ENCODE measurements at regions of chr12 and their contacts with region 1.

Region 1: DNA sequence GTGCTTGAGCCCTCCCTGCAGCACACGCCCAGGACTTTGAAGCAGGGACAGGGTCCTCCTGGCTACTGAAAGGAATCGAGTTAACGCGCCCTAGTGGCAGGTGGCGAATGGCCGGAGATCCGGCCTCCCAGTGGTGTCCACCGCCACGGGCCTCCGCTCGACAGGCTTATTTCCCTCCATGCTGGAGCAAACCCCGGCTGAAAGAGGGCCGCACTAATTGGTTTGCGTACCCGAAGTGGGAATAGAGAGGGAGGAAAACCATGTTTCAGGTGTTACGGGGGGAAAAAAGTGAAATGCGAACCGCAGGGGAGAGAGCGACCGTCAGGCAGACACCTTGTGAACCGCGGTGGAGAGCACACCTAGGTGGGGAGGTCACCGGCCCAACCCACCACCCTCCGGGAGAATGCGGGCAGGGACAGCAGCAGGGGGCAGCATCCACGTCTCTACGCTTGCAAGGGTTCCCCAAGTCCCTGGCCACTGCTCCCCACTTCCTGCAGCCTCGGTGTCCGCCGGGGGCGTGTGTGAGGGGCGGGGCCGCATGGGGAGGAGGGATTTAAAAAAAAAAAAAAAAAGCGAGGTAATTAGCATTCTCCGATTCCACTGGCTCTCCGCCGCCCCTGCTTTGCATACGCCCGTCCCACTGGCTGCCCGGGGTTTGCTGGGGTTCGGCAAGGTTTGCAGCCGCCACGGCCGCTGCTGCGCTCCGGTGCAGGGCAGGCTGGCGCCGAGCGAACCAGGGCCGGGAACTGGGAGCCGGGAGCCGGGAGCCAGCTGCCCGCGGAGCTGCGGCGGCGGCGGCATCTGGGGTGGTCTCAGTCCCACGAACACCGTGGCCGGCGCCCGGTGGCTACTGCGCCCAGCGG is 224.6 kb upstream of the CRY1 start:
- DNase-seq: peak; percentile 81
- H3K4me3 ChIP-seq: peak overlapping the region; percentile 29 to 41 (median 30)
- H3K27ac ChIP-seq: no peak overlapping the region
- H3K4me1 ChIP-seq: peaks cover 20% of the 10 kb centered on the region
- H3K27me3 ChIP-seq: peaks cover 36 to 48% of the 10 kb centered on the region in 2 experiments
- CTCF ChIP-seq: peak in 1 of 2 donors; percentile 1
- POLR2A ChIP-seq: no peak

Region 2: GRCh38 chr12:107277855-107278254 is 40.1 kb before region 1 on chr12:
- CTCF ChIA-PET with region 1: no interaction called
- POLR2A ChIA-PET with region 1: no interaction called
- dilution Hi-C with region 1: no loop called
- intact Hi-C with region 1: loop called (anchors 5 kb)
- DNase-seq: peak; percentile 81
- H3K4me3 ChIP-seq: no peak overlapping the region
- H3K27ac ChIP-seq: peak overlapping the region; percentile 69
- H3K4me1 ChIP-seq: peaks cover 17% of the 10 kb centered on the region
- H3K27me3 ChIP-seq: no peaks in the 10 kb centered on the region
- CTCF ChIP-seq: no peak
- POLR2A ChIP-seq: no peak

Region 3: GRCh38 chr12:107328442-107329133 is 10.6 kb after region 1 on chr12:
- CTCF ChIA-PET with region 1: no interaction called
- POLR2A ChIA-PET with region 1: no interaction called
- dilution Hi-C with region 1: no loop called
- intact Hi-C with region 1: loop called (anchors 1 kb)
- DNase-seq: peak; percentile 45
- H3K4me3 ChIP-seq: no peak overlapping the region
- H3K27ac ChIP-seq: no peak overlapping the region
- H3K4me1 ChIP-seq: peaks cover 9% of the 10 kb centered on the region
- H3K27me3 ChIP-seq: peaks cover 8 to 10% of the 10 kb centered on the region in 2 experiments
- CTCF ChIP-seq: no peak
- POLR2A ChIP-seq: no peak

Region 4: DNA sequence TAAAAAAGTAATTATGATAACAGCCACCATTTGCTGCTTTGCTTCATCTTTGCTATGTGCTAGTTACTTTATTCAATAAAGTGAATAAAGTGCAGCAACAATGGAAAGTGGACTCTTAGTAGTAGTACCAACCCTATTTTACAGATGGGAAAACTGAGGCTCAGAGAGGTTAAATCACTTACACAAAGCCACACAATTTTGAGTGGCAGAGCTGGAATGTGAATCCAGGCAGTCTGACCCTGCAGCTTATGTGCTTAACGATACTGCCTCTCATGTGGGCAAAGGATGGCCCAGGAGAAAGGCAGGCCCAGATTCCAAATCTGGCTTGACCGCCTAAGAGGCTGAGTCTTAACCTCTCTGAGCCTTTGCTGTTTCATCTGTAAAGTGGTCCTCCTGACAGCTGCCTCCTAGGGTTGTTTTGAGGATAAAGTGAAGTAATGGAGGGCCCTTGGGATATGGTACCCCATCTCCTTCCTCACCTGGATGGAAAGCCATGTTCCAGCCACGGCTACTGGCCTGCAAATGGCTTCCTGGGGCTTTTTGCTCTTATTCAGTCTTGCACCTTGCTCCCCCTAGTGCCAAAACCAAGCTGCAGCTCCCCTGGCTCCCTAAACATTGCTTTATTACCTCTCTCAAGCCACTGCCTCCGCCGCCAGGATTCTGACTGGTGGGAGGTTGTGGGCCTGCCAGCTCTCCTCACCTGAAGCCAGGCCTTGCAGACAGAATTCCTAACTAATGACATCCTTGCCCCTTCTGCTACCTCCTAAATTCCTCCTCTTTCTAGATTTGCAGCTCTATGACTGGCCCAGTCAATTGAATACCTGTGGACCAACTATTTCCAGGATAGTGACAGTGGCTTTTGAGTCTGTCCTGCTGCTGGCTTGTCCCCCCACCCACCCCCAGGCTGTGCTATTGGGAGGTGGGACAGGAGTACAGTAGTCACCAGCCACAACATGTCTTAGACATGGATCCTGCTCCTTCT is 84.3 kb after region 1 on chr12:
- CTCF ChIA-PET with region 1: no interaction called
- POLR2A ChIA-PET with region 1: no interaction called
- dilution Hi-C with region 1: no loop called
- intact Hi-C with region 1: loop called (anchors 1 kb)
- DNase-seq: peak; percentile 47
- H3K4me3 ChIP-seq: no peak overlapping the region
- H3K27ac ChIP-seq: no peak overlapping the region
- H3K4me1 ChIP-seq: no peaks in the 10 kb centered on the region
- H3K27me3 ChIP-seq: no peaks in the 10 kb centered on the region
- CTCF ChIP-seq: peak; percentile 50 to 72
- POLR2A ChIP-seq: no peak

Measured in endothelial cell of umbilical vein (primary cell).